PC-9 (cell line): ENCODE measurements at regions of chr17 and their contacts with region 1.

Region 1: GRCh38 chr17:47352848-47353247 is 29.1 kb downstream of the EFCAB13 start:
- DNase-seq: no peak
- H3K4me3 ChIP-seq: no peak overlapping the region
- H3K27ac ChIP-seq: no peak overlapping the region
- H3K4me1 ChIP-seq: no peaks in the 10 kb centered on the region
- H3K27me3 ChIP-seq: no peaks in the 10 kb centered on the region
- CTCF ChIP-seq: no peak

Region 2: DNA sequence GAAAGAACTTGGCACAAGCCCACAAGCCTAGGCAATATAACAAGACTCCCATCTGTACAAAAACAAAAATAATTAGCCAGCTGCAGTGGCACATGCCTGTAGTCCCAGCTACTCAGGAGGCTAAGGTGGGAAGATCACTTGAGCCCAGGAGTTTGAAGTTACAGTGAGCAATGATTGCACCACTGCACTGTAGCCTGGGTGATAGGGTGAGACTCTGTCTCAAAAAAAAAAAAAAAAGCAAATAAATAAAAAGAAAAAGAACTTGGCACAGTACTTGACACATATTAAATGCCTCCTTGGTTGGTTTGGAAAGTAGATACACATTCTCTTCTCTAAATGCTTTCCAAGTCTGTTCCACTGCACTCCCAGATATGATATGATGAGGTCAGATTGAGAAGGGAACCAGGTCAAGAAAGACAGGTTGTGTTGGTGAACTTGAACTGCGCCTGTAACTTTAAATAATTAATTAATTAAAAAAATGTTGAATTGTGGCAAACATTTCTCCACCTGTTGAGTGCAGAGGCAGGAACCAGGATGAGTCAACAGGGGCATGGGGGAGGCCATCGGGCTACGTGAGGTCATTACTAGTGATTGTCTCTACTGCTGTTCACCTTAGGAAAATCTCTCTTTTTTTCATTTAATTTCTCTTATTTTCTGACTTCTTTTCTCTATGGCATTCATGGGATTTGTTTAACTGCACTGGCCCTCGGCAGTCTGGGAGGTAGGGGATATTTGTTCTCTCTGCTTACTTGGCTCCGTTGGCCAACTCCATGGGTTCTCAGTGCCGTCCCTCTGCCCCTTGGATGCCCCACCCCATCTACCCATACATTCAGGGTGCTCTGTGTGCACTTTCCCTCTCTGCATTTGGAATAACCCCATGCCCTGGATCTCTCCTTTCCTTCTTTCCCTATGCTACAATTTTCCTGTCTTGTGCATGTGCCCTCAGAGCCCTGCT is 54.9 kb before region 1 on chr17:
- CTCF ChIA-PET with region 1: no interaction called
- POLR2A ChIA-PET with region 1: interaction called, 18 read pairs
- intact Hi-C with region 1: no loop called
- DNase-seq: peak in 1 of 2 experiments; percentile 37
- H3K4me3 ChIP-seq: no peak overlapping the region
- H3K27ac ChIP-seq: no peak overlapping the region
- H3K4me1 ChIP-seq: peaks cover 16% of the 10 kb centered on the region
- H3K27me3 ChIP-seq: no peaks in the 10 kb centered on the region
- CTCF ChIP-seq: no peak

Region 3: GRCh38 chr17:47335101-47335936 is 17.5 kb before region 1 on chr17:
- CTCF ChIA-PET with region 1: no interaction called
- POLR2A ChIA-PET with region 1: no interaction called
- intact Hi-C with region 1: no loop called
- DNase-seq: no peak
- H3K4me3 ChIP-seq: no peak overlapping the region
- H3K27ac ChIP-seq: no peak overlapping the region
- H3K4me1 ChIP-seq: peaks cover 10% of the 10 kb centered on the region
- H3K27me3 ChIP-seq: no peaks in the 10 kb centered on the region
- CTCF ChIP-seq: no peak

Region 4: GRCh38 chr17:47905221-47905781 is 552.5 kb after region 1 on chr17:
- CTCF ChIA-PET with region 1: no interaction called
- POLR2A ChIA-PET with region 1: no interaction called
- intact Hi-C with region 1: no loop called
- DNase-seq: no peak
- H3K4me3 ChIP-seq: no peak overlapping the region
- H3K27ac ChIP-seq: no peak overlapping the region
- H3K4me1 ChIP-seq: no peaks in the 10 kb centered on the region
- H3K27me3 ChIP-seq: no peaks in the 10 kb centered on the region
- CTCF ChIP-seq: no peak